Dorsolateral prefrontal cortex (tissue), 120 donors: ENCODE measurements at regions of chr2 and their contacts with region 1.

Region 1: DNA sequence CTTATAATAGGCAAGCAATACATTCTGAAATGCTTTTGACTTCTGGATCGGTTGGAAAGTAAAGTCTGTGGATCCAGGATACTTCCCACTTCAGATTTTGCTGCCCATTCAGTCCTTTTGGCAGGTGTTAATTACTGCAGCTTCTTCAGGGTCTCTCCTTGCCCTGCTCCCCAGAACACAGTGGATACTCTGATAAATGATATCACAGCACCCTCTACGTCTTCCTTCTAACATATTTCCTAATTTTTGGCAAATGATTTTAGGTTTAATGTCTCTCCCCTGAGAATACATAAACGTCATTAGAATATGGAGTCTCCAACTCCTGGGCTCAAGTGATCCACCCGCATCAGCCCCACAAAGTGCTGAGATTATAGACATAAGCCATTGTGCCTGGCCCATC is 249.8 kb downstream of the NYAP2 start:
- DNase-seq: no peak
- H3K4me3 ChIP-seq: no peak overlapping the region
- H3K27ac ChIP-seq: no peak overlapping the region
- H3K27me3 ChIP-seq: no peaks in the 10 kb centered on the region
- CTCF ChIP-seq: no peak

Region 2: GRCh38 chr2:225207043-225207442 is 442.2 kb before region 1 on chr2:
- intact Hi-C with region 1: no loop called
- DNase-seq: peak in 1 of 10 donors; percentile 25
- H3K4me3 ChIP-seq: no peak overlapping the region
- H3K27ac ChIP-seq: no peak overlapping the region
- H3K27me3 ChIP-seq: no peaks in the 10 kb centered on the region
- CTCF ChIP-seq: no peak

Region 3: DNA sequence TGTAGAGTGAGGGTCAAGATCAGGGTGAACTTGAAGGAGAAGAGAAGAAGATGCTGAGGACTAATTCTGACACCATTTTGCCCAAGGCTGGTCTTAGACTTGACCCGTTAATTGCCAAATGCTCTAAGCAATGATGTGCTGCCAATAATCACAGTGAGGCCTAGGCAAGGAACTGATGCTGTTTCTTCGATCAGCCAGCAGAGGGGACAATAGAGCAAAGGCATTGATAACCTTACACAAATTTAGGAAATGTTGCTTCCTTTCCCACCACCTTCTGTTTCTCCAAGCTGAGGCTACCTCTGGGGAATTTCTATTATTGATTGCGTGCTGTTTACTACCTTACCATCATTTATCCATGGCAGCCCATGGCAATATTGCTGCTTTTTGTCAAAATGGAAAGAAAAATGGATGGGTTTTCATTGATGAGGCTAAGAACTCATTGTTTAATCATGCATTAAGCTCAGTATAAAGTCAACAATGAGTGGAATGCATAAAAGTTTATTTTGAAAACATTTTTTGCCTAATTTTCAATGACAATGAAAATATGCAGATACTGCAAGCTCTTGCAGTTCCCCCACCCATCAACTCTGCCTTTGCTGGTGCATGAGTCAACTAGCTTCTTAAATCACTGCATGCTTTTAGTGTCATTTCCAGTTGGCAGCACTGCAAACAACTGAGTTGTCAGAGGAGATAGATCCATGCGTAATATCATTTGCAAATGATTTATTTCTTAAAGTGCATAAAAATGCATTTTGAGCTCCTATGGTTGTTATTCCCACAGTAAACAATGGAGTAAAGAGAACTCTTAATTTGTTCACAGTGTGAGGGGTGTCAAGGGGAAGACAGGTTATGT is 366.2 kb before region 1 on chr2:
- intact Hi-C with region 1: loop called in 1 of 2 experiments (anchors 10 kb)
- DNase-seq: peak in 2 of 10 donors; percentile 5 to 35
- H3K4me3 ChIP-seq: no peak overlapping the region
- H3K27ac ChIP-seq: no peak overlapping the region
- H3K27me3 ChIP-seq: peaks cover 0 to 3% (median 0%) of the 10 kb centered on the region in 45 donors
- CTCF ChIP-seq: peak; percentile 30 to 73 (median 59)

Region 4: GRCh38 chr2:225637259-225637658 is 12.0 kb before region 1 on chr2:
- intact Hi-C with region 1: loop called in 1 of 2 experiments (anchors 1 kb)
- DNase-seq: no peak
- H3K4me3 ChIP-seq: no peak overlapping the region
- H3K27ac ChIP-seq: no peak overlapping the region
- H3K27me3 ChIP-seq: no peaks in the 10 kb centered on the region
- CTCF ChIP-seq: no peak